Activated B cell treated with CpG ODN at 0.5 μM for 24 hours (primary cell): ENCODE measurements at regions of chr7 and their contacts with region 1.

Region 1: GRCh38 chr7:99472561-99473243 is at the start of gene ZNF789:
- DNase-seq: peak; percentile 90
- ATAC-seq: peak; percentile 97
- H3K4me3 Mint-ChIP-seq: peak within 1 kb of the TSS; percentile 98
- H3K27ac Mint-ChIP-seq: peak within 1 kb of the TSS; percentile 93
- H3K4me1 Mint-ChIP-seq: peaks cover 25% of the 10 kb centered on the region
- H3K27me3 Mint-ChIP-seq: no peaks in the 10 kb centered on the region
- CTCF ChIP-seq: no peak
- total RNA-seq, gene ZNF789: 24.5 and 38.3 TPM in 2 replicates

Region 2: GRCh38 chr7:99325545-99326407 is 146.9 kb before region 1 on chr7 and contains the start of gene ARPC1A:
- CTCF ChIA-PET with region 1: no interaction called
- POLR2A ChIA-PET with region 1: no interaction called
- intact Hi-C with region 1: loop called (anchors 5 kb)
- DNase-seq: peak; percentile 93
- ATAC-seq: peak; percentile 93
- H3K4me3 Mint-ChIP-seq: peak within 1 kb of the TSS; percentile 93
- H3K27ac Mint-ChIP-seq: peak within 1 kb of the TSS; percentile 89
- H3K4me1 Mint-ChIP-seq: peaks cover 42% of the 10 kb centered on the region
- H3K27me3 Mint-ChIP-seq: no peaks in the 10 kb centered on the region
- CTCF ChIP-seq: no peak
- total RNA-seq, gene ARPC1A: 47.3 and 51.6 TPM in 2 replicates

Region 3: GRCh38 chr7:99380032-99380822 is 92.5 kb before region 1 on chr7:
- CTCF ChIA-PET with region 1: no interaction called
- POLR2A ChIA-PET with region 1: interaction called, 6 read pairs
- intact Hi-C with region 1: loop called (anchors 1 kb)
- DNase-seq: peak; percentile 34
- ATAC-seq: peak; percentile 35
- H3K4me3 Mint-ChIP-seq: peak overlapping the region; percentile 83
- H3K27ac Mint-ChIP-seq: peak overlapping the region; percentile 98
- H3K4me1 Mint-ChIP-seq: peaks cover 71% of the 10 kb centered on the region
- H3K27me3 Mint-ChIP-seq: no peaks in the 10 kb centered on the region
- CTCF ChIP-seq: no peak

Region 4: DNA sequence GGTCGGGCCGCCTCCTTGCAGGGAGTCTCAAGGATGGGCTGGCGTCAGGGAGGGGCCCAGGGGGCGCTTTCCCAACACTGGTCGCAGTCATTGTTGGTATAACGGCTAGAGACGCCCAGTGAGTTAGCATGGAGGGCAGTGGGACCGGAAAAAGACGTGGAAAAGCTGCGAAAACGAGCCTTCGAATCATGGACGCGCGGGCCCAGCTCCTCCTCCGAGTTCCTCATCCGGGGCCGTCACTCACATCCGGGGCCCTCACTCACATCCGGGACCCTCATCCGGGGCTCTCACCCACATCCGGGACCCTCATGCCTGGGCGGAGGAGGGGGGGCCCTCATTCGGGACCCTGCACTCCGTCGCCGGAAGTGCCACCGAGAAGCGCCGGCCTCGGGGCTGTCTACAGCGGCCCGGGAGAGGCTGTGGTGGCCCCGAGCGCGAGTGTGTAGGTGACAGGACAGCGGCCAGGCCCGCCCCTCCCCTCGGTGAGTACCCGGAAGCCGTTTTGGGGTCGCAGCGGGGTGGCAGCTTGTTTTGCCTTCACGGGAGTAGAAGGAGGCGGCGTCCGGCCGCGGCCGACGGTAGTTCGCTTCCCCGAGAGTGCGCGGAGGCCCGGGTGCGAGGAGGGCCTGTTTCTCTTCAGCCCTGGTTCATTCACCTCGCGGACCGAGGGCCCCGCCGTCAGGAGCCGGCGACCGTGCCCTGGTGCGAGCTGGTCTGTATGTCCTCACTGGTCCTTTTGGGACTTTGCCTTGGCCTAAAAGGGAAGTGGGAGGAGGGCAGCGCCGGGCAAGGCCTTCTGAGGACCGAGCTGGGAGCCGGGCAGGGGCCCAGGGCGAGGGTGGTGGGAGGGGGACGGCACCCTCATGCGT is 85.8 kb after region 1 on chr7 and contains the start of gene ZNF655:
- CTCF ChIA-PET with region 1: no interaction called
- POLR2A ChIA-PET with region 1: interaction called, 9 read pairs
- intact Hi-C with region 1: loop called (anchors 1 kb)
- DNase-seq: peak; percentile 85
- ATAC-seq: peak; percentile 79
- H3K4me3 Mint-ChIP-seq: peak within 1 kb of the TSS; percentile 97
- H3K27ac Mint-ChIP-seq: peak within 1 kb of the TSS; percentile 97
- H3K4me1 Mint-ChIP-seq: peaks cover 49% of the 10 kb centered on the region
- H3K27me3 Mint-ChIP-seq: no peaks in the 10 kb centered on the region
- CTCF ChIP-seq: no peak
- total RNA-seq, gene ZNF655: 98.5 and 116 TPM in 2 replicates

Region 5: GRCh38 chr7:99616359-99617191 is 143.9 kb after region 1 on chr7 and contains the start of gene ZSCAN25:
- CTCF ChIA-PET with region 1: no interaction called
- POLR2A ChIA-PET with region 1: no interaction called
- intact Hi-C with region 1: loop called (anchors 2 kb)
- DNase-seq: peak; percentile 78
- ATAC-seq: peak; percentile 95
- H3K4me3 Mint-ChIP-seq: peak within 1 kb of the TSS; percentile 97
- H3K27ac Mint-ChIP-seq: peak within 1 kb of the TSS; percentile 90
- H3K4me1 Mint-ChIP-seq: peaks cover 30% of the 10 kb centered on the region
- H3K27me3 Mint-ChIP-seq: no peaks in the 10 kb centered on the region
- CTCF ChIP-seq: no peak
- total RNA-seq, gene ZSCAN25: 28.5 and 33.4 TPM in 2 replicates

Region 6: GRCh38 chr7:99901581-99902200 is 429.0 kb after region 1 on chr7:
- CTCF ChIA-PET with region 1: no interaction called
- POLR2A ChIA-PET with region 1: no interaction called
- intact Hi-C with region 1: no loop called
- DNase-seq: no peak
- ATAC-seq: no peak
- H3K4me3 Mint-ChIP-seq: no peak overlapping the region
- H3K27ac Mint-ChIP-seq: no peak overlapping the region
- H3K4me1 Mint-ChIP-seq: peaks cover 13% of the 10 kb centered on the region
- H3K27me3 Mint-ChIP-seq: no peaks in the 10 kb centered on the region
- CTCF ChIP-seq: no peak